Activated T-helper 2 cell treated with anti-CD3 and anti-CD28 coated beads, Interferon-gamma antibody, Interleukin-2, Interleukin-4, amounts not matched to agents 10 μg/mL and 5 μg/mL and 100 μg/mL, durations not matched to agents 14 hours and 24 hours and 36 hours (primary cell): ENCODE measurements at regions of chr5 and their contacts with region 1.

Region 1: GRCh38 chr5:40679155-40679913 is 381 bp upstream of the PTGER4 start:
- DNase-seq: peak; percentile 90
- H3K4me3 Mint-ChIP-seq: peak overlapping the region; percentile 99
- H3K27ac Mint-ChIP-seq: peak overlapping the region; percentile 98
- H3K4me1 Mint-ChIP-seq: peaks cover 51% of the 10 kb centered on the region
- H3K27me3 Mint-ChIP-seq: no peaks in the 10 kb centered on the region

Region 2: DNA sequence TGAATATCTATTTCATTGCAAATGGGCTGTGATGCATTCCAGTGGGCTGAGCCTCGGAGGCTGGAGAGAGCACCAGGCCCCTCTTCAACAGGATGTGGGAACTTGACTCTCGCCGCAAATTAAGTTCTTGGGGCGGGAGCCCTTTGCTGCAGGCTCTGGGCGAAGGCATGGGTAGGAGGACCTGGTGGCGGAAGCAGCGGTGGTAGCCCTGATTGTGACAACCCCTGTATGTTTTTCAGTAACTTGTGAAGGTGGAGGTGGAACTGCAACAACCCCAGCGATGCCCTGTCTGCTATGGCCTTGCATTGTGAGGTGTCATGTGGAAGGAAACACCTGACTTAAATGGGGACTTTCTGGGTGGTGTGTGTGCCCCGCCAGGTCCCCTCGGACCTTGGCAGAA is 1469.4 kb before region 1 on chr5:
- intact Hi-C with region 1: loop called (anchors 2 kb)
- DNase-seq: peak; percentile 82
- H3K4me3 Mint-ChIP-seq: peak overlapping the region; percentile 73
- H3K27ac Mint-ChIP-seq: peak overlapping the region; percentile 90
- H3K4me1 Mint-ChIP-seq: peaks cover 87% of the 10 kb centered on the region
- H3K27me3 Mint-ChIP-seq: no peaks in the 10 kb centered on the region

Region 3: DNA sequence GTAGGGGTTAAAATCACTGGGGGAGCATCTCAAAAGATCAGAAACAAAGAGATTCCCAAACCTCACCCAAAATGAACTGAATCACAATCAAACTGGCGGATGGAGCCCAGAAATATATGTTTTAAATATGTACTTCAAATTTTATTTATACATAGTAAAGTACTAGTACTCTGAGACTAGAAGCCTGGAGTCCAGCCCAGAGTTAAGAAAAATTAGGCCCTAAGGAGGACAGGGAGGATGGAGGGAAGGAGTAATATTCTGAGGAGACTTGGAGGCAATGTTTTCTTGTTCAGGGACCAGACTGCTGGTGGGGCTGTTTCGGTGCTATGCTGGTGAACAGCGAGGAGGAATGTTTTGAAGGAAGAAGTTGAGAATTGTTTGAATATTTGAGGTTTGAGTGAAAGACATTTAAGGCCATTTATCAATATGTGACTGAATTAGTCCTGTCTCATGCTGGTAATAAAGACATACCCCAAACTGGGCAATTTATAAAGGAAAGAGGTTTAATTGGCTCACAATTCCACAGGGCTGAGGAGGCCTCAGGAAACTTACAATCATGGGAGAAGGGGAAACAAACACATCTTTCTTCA is 702.2 kb before region 1 on chr5:
- intact Hi-C with region 1: no loop called
- DNase-seq: no peak
- H3K4me3 Mint-ChIP-seq: no peak overlapping the region
- H3K27ac Mint-ChIP-seq: no peak overlapping the region
- H3K4me1 Mint-ChIP-seq: no peaks in the 10 kb centered on the region
- H3K27me3 Mint-ChIP-seq: no peaks in the 10 kb centered on the region

Region 4: DNA sequence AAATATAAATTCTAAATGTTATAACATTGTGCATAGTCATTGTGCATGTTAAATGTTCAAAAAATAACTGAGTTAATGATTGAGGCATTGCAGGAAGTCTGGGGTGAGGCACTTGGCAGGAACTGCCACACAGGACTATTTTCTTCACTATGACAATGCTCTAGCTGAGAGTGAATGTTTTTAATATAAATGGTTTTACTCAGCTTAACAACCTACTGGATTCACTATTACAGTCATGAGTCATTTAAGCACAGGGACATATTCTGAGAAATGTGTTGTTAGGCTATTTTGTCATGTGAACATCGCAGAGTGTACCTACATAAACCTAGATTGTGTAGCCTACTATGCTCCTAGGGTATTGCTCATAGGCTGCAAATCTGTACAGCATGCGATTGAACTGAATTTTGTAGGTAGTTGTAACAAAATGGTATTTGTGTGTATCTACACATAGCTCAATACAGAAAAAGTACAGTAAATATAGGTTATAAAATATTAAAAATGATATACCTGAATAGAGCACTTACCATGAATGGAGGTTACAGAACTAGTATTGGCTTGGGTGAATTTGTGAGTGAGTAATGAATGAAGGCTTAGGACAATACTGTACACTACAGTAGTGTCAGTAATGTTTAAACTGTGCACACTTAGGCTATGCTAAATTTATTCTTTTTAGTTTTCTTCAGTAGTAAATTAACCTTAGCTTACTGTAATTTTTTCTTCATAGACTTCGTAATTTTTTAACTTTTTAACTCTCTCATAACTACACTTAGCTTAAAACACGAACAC is 345.7 kb before region 1 on chr5:
- intact Hi-C with region 1: loop called (anchors 2 kb)
- DNase-seq: no peak
- H3K4me3 Mint-ChIP-seq: no peak overlapping the region
- H3K27ac Mint-ChIP-seq: peak overlapping the region; percentile 43
- H3K4me1 Mint-ChIP-seq: peaks cover 43% of the 10 kb centered on the region
- H3K27me3 Mint-ChIP-seq: no peaks in the 10 kb centered on the region

Region 5: GRCh38 chr5:40437452-40437861 is 241.9 kb before region 1 on chr5:
- intact Hi-C with region 1: loop called (anchors 1 kb)
- DNase-seq: no peak
- H3K4me3 Mint-ChIP-seq: no peak overlapping the region
- H3K27ac Mint-ChIP-seq: peak overlapping the region; percentile 77
- H3K4me1 Mint-ChIP-seq: peaks cover 74% of the 10 kb centered on the region
- H3K27me3 Mint-ChIP-seq: no peaks in the 10 kb centered on the region

Region 6: GRCh38 chr5:40464511-40464910 is 214.8 kb before region 1 on chr5:
- intact Hi-C with region 1: no loop called
- DNase-seq: no peak
- H3K4me3 Mint-ChIP-seq: no peak overlapping the region
- H3K27ac Mint-ChIP-seq: no peak overlapping the region
- H3K4me1 Mint-ChIP-seq: peaks cover 9% of the 10 kb centered on the region
- H3K27me3 Mint-ChIP-seq: no peaks in the 10 kb centered on the region

Region 7: GRCh38 chr5:40594811-40595210 is 84.5 kb before region 1 on chr5:
- intact Hi-C with region 1: loop called (anchors 1 kb)
- DNase-seq: no peak
- H3K4me3 Mint-ChIP-seq: no peak overlapping the region
- H3K27ac Mint-ChIP-seq: no peak overlapping the region
- H3K4me1 Mint-ChIP-seq: peaks cover 30% of the 10 kb centered on the region
- H3K27me3 Mint-ChIP-seq: peaks cover 3% of the 10 kb centered on the region

Region 8: DNA sequence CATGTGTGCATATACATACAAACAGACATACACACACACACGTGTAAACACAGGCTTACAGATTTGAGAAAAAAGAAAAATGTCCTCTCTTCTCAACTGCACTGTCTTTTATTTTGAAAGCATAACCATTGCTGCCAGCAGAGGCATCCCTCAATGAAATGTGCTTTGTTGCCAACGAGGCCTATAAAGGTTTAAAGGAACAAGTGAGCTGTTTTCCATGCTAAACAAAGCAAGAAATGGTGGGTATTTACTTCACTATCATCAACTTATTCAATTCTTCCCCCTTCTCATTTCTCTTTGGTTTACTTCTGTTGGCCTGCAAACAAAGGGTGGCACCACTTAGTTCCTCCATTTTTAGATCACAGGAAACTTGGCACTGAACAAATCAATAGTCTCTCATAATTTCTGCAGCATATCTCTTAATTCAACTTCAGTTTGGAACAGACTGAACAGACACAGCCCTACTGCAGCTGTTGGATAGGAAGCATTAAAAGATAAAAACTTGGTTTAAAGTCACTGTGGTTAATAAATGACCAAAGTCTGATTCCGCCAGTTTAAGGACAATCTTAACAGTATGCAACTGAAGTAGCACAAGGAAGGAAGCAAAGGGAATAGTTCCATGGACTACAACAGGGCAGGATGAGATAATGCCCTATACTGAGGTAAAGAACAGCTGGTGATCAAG is 54.7 kb after region 1 on chr5:
- intact Hi-C with region 1: no loop called
- DNase-seq: no peak
- H3K4me3 Mint-ChIP-seq: no peak overlapping the region
- H3K27ac Mint-ChIP-seq: no peak overlapping the region
- H3K4me1 Mint-ChIP-seq: peaks cover 31% of the 10 kb centered on the region
- H3K27me3 Mint-ChIP-seq: no peaks in the 10 kb centered on the region

Region 9: DNA sequence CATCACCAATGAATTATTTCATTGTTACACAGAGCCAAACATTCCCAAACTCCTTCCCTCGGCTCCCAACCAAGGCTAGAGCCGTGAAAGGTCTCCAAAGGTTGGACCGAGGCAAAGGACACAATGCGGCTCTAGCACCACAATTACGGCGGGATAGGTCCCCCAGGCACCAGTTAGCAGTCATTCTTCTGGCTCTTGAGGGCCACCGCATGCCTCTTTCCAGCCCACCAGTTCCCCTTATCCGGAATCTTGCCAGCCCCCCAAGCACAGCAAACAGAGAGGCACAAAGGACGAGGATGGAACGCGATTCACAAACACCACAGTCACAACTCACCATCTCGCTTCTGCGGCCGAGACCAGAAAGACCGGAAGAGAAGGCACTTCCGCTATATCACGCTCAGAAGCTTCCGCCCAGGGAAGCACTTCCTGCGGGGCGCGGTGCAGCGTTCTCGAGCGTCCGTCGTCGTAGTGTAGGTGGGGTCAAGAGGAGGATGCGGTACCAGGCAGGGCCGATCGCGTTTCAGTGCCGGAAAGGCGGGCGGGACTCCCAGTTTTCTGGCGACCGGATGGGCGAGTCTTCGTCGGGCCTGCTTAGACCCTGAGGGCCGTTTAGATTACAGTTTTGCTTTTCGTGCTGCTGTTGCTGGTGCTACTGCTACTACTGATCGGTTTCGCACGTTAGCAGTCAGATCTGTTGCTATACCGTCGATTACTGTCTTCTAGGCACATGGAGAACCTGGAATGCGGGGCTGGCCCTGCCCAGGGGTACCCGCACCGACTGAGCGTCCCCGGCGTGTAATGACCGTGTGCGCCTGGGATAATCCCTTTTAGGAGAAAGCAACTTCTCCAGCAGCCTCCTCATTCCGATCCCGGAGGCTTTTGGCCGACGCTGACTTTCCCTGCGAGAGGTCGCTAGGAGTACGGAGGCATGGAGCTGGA is 155.8 kb after region 1 on chr5 and contains the start of gene RPL37:
- intact Hi-C with region 1: loop called (anchors 2 kb)
- DNase-seq: peak; percentile 91
- H3K4me3 Mint-ChIP-seq: peak within 1 kb of the TSS; percentile 99
- H3K27ac Mint-ChIP-seq: peak within 1 kb of the TSS; percentile 98
- H3K4me1 Mint-ChIP-seq: peaks cover 47% of the 10 kb centered on the region
- H3K27me3 Mint-ChIP-seq: no peaks in the 10 kb centered on the region
- total RNA-seq, gene RPL37: 1,583 and 1,632 TPM in 2 replicates